ENCODE measurements at regions of chr16 and their contacts with region 1.

Region 1: DNA sequence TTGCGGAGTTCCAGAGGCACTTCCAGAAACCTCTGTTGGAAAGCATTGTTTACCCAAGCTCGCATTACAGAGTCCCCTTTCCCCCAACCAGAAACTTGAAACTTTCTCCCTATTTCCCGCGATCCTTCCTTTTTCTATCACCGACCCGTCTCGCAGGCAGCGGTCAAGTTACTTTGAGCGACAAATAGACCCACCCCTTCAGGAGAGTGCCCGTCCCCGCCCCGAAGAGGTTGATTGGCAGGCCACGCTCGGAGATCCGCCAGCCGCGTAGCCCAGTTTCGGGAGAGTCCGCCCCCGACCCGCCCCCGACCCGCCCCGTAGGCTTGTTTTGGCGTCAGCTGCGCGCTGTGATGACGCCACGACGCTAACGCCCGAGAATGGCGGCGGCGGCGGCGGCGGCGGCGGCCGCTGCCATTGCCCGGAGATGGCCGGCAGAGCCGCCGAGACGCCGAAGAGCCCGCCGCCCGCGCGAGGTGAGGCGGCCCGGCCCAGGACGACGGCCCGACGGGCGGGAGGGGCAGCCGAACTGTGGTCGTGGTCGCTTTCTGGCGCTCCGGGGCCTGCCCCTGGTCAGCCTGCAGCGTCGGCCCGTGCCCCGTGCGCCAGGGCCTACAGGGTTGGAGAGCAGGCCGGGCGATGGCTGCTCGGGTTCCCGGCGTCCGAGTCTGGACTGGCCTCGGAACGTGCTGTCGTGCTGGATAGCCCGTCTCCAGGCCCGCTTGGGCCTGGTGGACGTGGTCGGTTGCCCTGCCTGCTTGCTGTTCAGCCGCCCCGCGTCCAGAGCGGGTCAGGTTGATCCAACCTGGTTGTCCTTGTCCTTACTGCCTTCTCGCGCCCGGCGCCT is at the start of gene PSKH1:
- DNase-seq: peak; percentile 100
- H3K4me3 ChIP-seq: peak within 1 kb of the TSS; percentile 80 to 97
- H3K27ac ChIP-seq: peak within 1 kb of the TSS; percentile 68 to 69
- H3K4me1 ChIP-seq: peaks cover 10 to 11% of the 10 kb centered on the region in 2 experiments; a peak in 2 of 4 replicates
- H3K27me3 ChIP-seq: no peaks in the 10 kb centered on the region
- CTCF ChIP-seq: no peak
- EP300 ChIP-seq: peak in 1 of 2 experiments; percentile 53; a peak in 1 of 4 replicates
- RAD21 ChIP-seq: no peak
- polyA plus RNA-seq, gene PSKH1: 30.1 and 31.4 TPM in 2 replicates

Region 2: DNA sequence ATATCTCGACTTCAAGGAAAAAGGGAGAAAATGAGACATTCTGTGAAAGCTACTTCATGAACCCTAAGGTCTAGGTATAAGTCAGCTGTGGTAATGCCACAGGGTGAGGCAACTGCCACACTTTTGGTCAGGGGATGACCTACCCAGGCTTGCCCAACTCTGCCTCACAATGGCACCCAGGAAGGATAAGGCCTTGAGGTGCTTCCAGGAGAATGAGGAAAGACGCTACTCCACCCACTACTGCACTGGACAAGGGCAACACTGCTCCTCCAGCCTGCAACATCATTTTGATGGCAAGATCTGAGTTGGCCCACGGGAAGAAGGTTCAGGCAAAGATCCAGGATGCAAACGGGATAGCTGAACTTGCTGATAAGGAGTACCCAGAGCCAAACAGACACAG is 152.0 kb before region 1 on chr16:
- CTCF ChIA-PET with region 1: no interaction called
- POLR2A ChIA-PET with region 1: no interaction called
- DNase-seq: no peak
- H3K4me3 ChIP-seq: no peak overlapping the region
- H3K27ac ChIP-seq: no peak overlapping the region
- H3K4me1 ChIP-seq: no peaks in the 10 kb centered on the region
- H3K27me3 ChIP-seq: no peaks in the 10 kb centered on the region
- CTCF ChIP-seq: no peak
- EP300 ChIP-seq: no peak
- RAD21 ChIP-seq: no peak

Region 3: GRCh38 chr16:67935402-67936123 is 42.4 kb after region 1 on chr16:
- CTCF ChIA-PET with region 1: interaction called, 564 read pairs
- POLR2A ChIA-PET with region 1: no interaction called
- DNase-seq: peak; percentile 98
- H3K4me3 ChIP-seq: peak overlapping the region; percentile 84 to 89
- H3K27ac ChIP-seq: peak overlapping the region; percentile 79 to 85
- H3K4me1 ChIP-seq: peaks cover 11 to 28% of the 10 kb centered on the region in 2 experiments; a peak in 2 of 4 replicates
- H3K27me3 ChIP-seq: no peaks in the 10 kb centered on the region
- CTCF ChIP-seq: no peak
- EP300 ChIP-seq: no peak
- RAD21 ChIP-seq: no peak

Region 4: DNA sequence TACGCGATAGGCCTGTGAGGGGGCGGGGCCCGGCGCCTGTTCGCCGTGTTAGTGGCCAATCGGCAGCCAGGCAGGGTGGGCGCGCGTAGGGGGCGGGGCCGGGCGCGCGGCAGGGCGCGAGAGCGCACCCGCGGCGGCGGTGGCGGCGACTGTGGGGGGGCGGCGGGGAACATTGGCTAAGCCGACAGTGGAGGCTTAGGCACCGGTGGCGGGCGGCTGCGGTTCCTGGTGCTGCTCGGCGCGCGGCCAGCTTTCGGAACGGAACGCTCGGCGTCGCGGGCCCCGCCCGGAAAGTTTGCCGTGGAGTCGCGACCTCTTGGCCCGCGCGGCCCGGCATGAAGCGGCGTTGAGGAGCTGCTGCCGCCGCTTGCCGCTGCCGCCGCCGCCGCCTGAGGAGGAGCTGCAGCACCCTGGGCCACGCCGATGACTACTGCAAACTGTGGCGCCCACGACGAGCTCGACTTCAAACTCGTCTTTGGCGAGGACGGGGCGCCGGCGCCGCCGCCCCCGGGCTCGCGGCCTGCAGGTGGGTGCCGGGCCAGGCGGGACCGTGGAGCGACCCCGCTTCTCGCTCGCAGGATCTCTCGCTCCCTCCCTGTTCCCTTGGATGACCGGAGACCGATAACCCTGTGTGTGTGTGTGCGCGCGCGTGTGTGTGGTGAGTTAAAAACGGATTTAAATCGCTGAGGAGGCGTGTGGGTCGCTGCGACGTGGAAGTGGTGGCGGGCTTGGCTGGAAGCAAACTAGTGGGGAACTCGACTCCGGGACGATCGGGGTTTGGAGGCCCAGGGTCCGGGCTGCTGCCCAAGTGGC is 192.3 kb after region 1 on chr16 and contains the start of gene NFATC3:
- CTCF ChIA-PET with region 1: no interaction called
- POLR2A ChIA-PET with region 1: no interaction called
- DNase-seq: peak; percentile 97
- H3K4me3 ChIP-seq: peak within 1 kb of the TSS; percentile 78 to 97
- H3K27ac ChIP-seq: peak within 1 kb of the TSS; percentile 83 to 99
- H3K4me1 ChIP-seq: peaks cover 11 to 14% of the 10 kb centered on the region in 2 experiments; a peak in 3 of 4 replicates
- H3K27me3 ChIP-seq: no peaks in the 10 kb centered on the region
- CTCF ChIP-seq: no peak
- EP300 ChIP-seq: peak in 1 of 2 experiments; percentile 39; a peak in 1 of 4 replicates
- RAD21 ChIP-seq: no peak
- polyA plus RNA-seq, gene NFATC3: 5.7 and 7.8 TPM in 2 replicates